PC-9 (cell line): ENCODE measurements at regions of chr17 and their contacts with region 1.

Region 1: GRCh38 chr17:63406689-63407330 is 39.3 kb downstream of the CYB561 start:
- DNase-seq: peak; percentile 55 to 71
- H3K4me3 ChIP-seq: no peak overlapping the region
- H3K27ac ChIP-seq: no peak overlapping the region
- H3K4me1 ChIP-seq: no peaks in the 10 kb centered on the region
- H3K27me3 ChIP-seq: no peaks in the 10 kb centered on the region
- CTCF ChIP-seq: peak; percentile 86

Region 2: GRCh38 chr17:62671583-62672312 is 735.1 kb before region 1 on chr17:
- CTCF ChIA-PET with region 1: interaction called, 12 read pairs
- POLR2A ChIA-PET with region 1: no interaction called
- intact Hi-C with region 1: loop called (anchors 1 kb)
- DNase-seq: peak in 1 of 2 experiments; percentile 50
- H3K4me3 ChIP-seq: no peak overlapping the region
- H3K27ac ChIP-seq: no peak overlapping the region
- H3K4me1 ChIP-seq: no peaks in the 10 kb centered on the region
- H3K27me3 ChIP-seq: no peaks in the 10 kb centered on the region
- CTCF ChIP-seq: no peak

Region 3: GRCh38 chr17:62995377-62995885 is 411.4 kb before region 1 on chr17:
- CTCF ChIA-PET with region 1: no interaction called
- POLR2A ChIA-PET with region 1: no interaction called
- intact Hi-C with region 1: loop called (anchors 10 kb)
- DNase-seq: no peak
- H3K4me3 ChIP-seq: no peak overlapping the region
- H3K27ac ChIP-seq: no peak overlapping the region
- H3K4me1 ChIP-seq: no peaks in the 10 kb centered on the region; the same call in 1 of the 2 replicates
- H3K27me3 ChIP-seq: no peaks in the 10 kb centered on the region
- CTCF ChIP-seq: peak; percentile 47

Region 4: DNA sequence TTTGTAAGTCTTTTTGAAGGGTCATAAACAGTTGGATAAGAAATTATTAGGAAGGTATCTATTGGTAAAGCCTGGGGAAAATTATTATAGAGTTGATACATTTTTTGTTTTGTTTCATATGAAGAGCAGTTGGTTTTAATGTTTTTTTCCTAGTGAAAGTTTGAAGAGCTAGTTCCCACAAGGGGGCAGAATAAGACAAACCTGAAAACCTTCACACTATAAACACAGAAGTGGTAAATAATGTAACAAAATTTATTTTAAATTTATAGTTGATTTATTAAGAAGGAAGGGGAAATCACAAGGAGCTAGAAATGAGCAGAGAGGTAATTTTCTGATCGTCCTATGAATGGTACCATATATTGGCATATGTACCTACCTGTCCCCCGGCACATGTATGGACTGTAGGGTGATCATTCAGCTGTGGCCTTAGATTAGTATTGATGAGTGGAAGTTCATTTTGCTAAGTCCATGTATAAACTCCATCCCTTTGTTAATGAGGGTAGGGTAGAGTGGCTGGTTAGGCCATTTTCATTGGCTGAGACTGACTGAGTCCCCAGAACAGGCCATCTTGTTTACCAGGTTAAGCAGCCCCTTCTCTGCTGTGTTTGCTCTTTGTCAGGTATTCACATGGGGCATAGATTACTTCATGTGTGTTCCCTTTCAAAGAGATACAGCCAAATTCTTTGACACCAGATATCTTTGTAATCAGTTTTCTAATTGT is 324.4 kb before region 1 on chr17:
- CTCF ChIA-PET with region 1: interaction called, 6 read pairs
- POLR2A ChIA-PET with region 1: no interaction called
- intact Hi-C with region 1: loop called (anchors 1 kb)
- DNase-seq: no peak
- H3K4me3 ChIP-seq: no peak overlapping the region
- H3K27ac ChIP-seq: no peak overlapping the region
- H3K4me1 ChIP-seq: no peaks in the 10 kb centered on the region
- H3K27me3 ChIP-seq: no peaks in the 10 kb centered on the region
- CTCF ChIP-seq: peak; percentile 62